A673 (cell line): ENCODE measurements at regions of chr15 and their contacts with region 1.

Region 1: GRCh38 chr15:82197733-82198594 is 64.6 kb downstream of the EFL1 start:
- DNase-seq: peak; percentile 76
- H3K4me3 ChIP-seq: no peak overlapping the region
- H3K27ac ChIP-seq: no peak overlapping the region
- H3K4me1 ChIP-seq: no peaks in the 10 kb centered on the region
- H3K27me3 ChIP-seq: no peaks in the 10 kb centered on the region
- CTCF ChIP-seq: peak; percentile 78

Region 2: DNA sequence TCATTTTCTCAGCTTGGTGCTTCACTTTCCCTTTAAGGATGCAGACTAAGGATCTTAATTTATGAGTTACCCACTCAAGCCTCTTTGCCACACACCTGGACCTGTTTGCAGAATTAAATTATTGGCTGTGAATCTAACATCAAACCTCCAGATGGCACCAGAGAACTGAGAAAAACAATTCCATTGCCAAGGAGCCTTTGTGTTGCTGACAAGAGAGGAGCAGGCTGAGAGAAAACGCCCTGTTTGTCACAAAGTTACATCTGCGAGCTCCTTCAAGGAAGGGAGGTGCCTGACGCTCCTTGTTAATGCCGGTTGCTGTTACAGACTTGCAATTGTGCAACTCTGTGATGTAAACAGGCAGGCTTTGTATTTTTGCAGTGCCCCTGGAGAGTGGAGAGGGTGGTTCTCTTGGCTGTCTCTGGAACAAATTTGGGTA is 787.6 kb before region 1 on chr15:
- CTCF ChIA-PET with region 1: no interaction called
- POLR2A ChIA-PET with region 1: no interaction called
- intact Hi-C with region 1: loop called (anchors 2 kb)
- DNase-seq: peak; percentile 73
- H3K4me3 ChIP-seq: no peak overlapping the region
- H3K27ac ChIP-seq: no peak overlapping the region
- H3K4me1 ChIP-seq: no peaks in the 10 kb centered on the region
- H3K27me3 ChIP-seq: peaks cover 38% of the 10 kb centered on the region
- CTCF ChIP-seq: peak; percentile 63

Region 3: DNA sequence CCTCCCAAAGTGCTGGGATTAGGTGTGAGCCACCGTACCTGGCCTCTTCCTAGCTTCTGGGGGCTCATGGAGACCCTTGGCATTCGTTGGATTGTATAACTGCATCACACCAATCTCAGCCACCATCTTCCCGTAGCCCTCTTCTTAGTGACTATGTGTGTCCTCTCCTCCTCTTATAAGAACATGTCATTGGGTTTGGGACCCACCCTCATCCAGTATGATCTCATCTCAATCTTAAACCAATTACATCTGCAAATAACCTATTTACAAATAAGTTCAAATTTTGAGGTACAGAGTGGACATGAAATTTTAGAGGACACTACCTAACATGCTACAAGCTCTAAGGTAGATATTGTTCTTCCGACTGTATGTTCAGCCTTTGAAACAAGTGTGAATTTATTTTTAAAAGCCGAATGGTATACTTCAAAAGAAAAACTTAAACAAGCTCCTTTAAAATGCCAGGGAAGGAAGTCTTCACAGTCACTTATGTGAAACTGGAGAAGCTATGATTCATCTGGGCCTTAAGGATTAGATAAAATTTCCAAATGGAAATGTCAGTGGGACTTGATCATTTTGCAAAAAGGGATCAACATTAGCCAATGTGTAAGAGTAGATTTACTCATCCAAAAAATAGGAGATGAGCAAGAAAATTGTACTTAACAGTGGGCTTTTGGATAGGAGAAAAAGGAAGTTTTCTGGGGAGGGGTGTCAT is 377.9 kb before region 1 on chr15:
- CTCF ChIA-PET with region 1: no interaction called
- POLR2A ChIA-PET with region 1: no interaction called
- intact Hi-C with region 1: no loop called
- DNase-seq: no peak
- H3K4me3 ChIP-seq: no peak overlapping the region
- H3K27ac ChIP-seq: no peak overlapping the region
- H3K4me1 ChIP-seq: no peaks in the 10 kb centered on the region
- H3K27me3 ChIP-seq: no peaks in the 10 kb centered on the region
- CTCF ChIP-seq: no peak

Region 4: DNA sequence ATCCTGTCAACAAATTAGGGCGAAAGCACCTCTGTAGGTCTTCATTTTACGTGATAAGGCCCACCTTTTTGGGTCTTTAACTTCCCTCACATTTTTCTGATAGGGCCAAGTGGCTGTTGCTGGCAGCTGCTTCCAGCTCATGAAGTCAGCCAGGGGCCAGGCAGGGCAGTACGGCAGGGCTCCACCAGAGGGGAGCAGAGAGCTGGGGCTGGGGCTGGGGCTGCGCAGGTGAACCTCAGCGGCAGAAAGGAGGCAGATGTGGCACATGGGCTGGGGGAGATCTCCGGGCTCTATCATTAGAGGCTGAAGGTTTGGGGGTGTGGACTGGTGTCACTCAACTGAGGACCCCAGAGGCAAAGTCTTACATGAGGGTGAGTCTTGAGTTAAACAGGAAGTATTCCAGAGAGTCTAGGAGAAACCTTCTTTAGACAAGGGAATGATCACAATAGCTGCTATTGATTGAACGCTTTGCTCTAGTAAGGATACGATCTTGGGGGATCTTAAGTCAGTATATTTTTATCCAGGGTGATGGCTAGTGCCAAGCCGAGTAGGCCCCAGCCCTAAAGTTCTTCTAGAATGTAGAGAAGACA is 89.4 kb before region 1 on chr15:
- CTCF ChIA-PET with region 1: no interaction called
- POLR2A ChIA-PET with region 1: no interaction called
- intact Hi-C with region 1: loop called (anchors 5 kb)
- DNase-seq: peak; percentile 28
- H3K4me3 ChIP-seq: no peak overlapping the region
- H3K27ac ChIP-seq: no peak overlapping the region
- H3K4me1 ChIP-seq: no peaks in the 10 kb centered on the region
- H3K27me3 ChIP-seq: no peaks in the 10 kb centered on the region
- CTCF ChIP-seq: peak; percentile 76

Region 5: DNA sequence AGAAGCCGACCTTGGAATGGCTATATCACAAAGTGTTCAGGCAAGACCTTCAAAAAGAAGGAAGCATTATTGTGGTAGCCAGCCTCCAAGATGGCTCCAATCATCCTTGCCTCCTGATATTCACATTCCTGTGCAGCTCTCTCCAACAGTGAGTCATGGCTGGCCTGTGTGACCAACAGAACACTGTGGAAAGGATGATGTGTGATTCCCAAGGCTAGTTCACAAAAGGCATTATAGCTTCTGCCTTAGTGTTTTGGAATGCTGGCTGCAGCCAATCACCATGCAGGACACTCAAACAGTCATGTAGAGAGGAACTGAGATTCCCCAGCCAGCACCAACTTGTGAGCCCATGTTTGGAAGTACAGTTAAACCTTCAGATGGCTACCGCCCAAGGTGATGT is 38.0 kb before region 1 on chr15:
- CTCF ChIA-PET with region 1: no interaction called
- POLR2A ChIA-PET with region 1: no interaction called
- intact Hi-C with region 1: no loop called
- DNase-seq: no peak
- H3K4me3 ChIP-seq: no peak overlapping the region
- H3K27ac ChIP-seq: no peak overlapping the region
- H3K4me1 ChIP-seq: no peaks in the 10 kb centered on the region
- H3K27me3 ChIP-seq: no peaks in the 10 kb centered on the region
- CTCF ChIP-seq: no peak